Sigmoid colon (tissue), 7 donors: ENCODE measurements at regions of chr19 and their contacts with region 1.

Region 1: GRCh38 chr19:10535613-10536012 is 8.1 kb upstream of the ATG4D start:
- DNase-seq: no peak
- H3K4me3 ChIP-seq: no peak overlapping the region
- H3K27ac ChIP-seq: no peak overlapping the region
- H3K4me1 ChIP-seq: no peaks in the 10 kb centered on the region
- H3K27me3 ChIP-seq: peaks cover 0 to 7% (median 5%) of the 10 kb centered on the region in 3 donors
- CTCF ChIP-seq: no peak
- EP300 ChIP-seq: no peak
- POLR2A ChIP-seq: no peak

Region 2: DNA sequence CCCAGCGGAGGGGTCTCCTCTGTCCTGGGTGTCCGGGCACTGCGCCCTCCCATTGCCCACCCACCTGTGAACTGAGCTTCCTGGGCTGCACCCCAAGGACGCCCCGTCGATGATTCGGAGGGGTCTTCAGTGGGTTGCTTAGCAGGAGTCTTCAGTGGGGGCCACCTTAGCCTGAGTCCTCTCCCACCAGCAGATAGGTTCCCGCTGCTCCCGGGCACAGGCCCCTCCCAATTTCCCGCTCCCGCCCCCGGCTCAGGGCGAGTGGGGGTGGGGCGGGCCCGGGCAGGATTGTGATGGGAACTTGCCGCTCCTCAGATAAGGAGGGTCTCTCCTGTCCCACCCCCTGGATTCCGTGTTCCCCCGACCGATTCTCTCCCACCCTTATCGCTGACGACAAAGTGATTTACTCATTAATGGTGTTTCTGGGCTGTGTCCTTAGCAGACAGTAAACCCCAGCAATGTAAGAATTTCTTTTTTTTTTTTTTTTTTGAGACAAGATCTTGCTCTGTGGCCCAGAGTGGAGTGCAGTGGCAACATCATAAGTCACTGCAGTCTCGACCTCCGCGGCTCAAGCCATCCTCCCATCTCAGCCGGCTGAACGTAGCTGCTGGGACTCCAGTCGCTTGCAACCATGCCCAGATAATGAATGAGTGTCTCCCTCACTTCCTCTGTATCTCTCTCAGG is 17.7 kb before region 1 on chr19:
- intact Hi-C with region 1: loop called (anchors 2 kb)
- DNase-seq: no peak
- H3K4me3 ChIP-seq: peak overlapping the region in 3 of 4 donors; percentile 1 to 36 (median 28)
- H3K27ac ChIP-seq: no peak overlapping the region
- H3K4me1 ChIP-seq: peaks cover 0 to 35% (median 21%) of the 10 kb centered on the region in 4 donors
- H3K27me3 ChIP-seq: peaks cover 50 to 77% (median 77%) of the 10 kb centered on the region in 3 donors
- CTCF ChIP-seq: no peak
- EP300 ChIP-seq: no peak
- POLR2A ChIP-seq: no peak